ENCODE measurements at regions of chr10 and their contacts with region 1.

Region 1: DNA sequence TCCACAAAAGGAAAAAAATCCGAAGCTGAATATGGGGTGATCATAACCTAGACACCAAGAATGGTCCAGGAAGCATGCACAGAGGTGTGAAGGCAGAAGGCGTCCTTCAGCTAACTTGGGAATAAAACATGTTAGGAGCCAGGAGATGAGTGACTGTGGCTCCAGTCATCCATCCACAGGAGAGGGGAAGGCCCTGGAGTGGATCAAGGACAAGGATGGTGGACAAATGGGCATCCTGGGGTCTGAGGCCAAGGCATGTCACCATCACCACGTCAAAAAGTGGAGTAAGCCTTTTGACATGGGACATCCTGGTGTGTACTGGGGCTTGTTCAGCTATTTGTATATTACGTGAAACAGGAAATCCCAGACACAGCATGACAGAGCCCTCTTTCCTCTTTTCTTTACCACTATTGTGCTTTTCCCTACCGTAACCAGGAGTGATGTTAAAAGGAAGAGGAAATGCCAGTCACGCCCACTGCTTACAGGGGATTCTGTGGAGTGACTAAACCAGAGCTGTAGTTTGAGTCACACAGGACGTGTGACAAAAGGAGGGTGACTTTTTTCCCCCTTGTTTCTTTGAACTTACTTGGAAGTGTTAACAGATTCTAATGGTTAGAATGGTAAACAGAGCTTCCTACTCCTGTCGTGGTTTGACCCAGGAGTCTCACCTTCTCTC is 15.4 kb downstream of the ACSL5 start:
- DNase-seq: peak; percentile 84
- H3K4me3 Mint-ChIP-seq: peak overlapping the region; percentile 70
- H3K27ac Mint-ChIP-seq: peak overlapping the region; percentile 88
- H3K4me1 Mint-ChIP-seq: peaks cover 47% of the 10 kb centered on the region
- H3K27me3 Mint-ChIP-seq: no peaks in the 10 kb centered on the region

Region 2: DNA sequence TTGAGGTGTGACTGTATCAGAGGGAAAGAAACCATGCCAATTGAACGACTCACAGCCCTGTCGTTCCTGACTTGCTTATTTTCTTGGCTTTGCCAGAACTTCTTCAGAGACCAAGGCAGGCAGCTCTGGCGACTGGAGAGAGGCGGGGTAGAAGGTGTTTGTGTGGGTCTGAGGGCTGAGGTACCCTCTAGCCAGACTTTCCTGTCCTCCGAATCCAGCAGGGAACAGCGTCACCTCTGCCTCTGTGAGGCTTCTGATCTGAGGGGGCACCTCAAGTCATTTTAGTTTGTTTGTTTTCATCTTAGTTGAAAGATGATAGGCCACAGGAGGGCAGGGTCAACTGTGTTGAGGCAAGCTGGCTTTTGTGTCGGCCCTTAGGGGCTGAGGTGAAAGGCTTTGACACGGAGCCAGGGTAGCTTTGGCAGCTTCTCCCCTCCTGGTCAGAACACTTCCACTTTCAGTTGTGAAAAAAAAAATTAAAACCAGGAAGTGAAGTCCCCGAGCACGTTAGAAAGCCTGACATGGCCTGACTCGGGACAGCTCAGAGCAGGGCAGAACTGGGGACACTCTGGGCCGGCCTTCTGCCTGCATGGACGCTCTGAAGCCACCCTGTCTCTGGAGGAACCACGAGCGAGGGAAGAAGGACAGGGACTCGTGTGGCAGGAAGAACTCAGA is 13.4 kb before region 1 on chr10:
- intact Hi-C with region 1: loop called (anchors 1 kb)
- DNase-seq: peak; percentile 88
- H3K4me3 Mint-ChIP-seq: peak overlapping the region; percentile 100
- H3K27ac Mint-ChIP-seq: peak overlapping the region; percentile 100
- H3K4me1 Mint-ChIP-seq: peaks cover 52% of the 10 kb centered on the region
- H3K27me3 Mint-ChIP-seq: no peaks in the 10 kb centered on the region

Region 3: DNA sequence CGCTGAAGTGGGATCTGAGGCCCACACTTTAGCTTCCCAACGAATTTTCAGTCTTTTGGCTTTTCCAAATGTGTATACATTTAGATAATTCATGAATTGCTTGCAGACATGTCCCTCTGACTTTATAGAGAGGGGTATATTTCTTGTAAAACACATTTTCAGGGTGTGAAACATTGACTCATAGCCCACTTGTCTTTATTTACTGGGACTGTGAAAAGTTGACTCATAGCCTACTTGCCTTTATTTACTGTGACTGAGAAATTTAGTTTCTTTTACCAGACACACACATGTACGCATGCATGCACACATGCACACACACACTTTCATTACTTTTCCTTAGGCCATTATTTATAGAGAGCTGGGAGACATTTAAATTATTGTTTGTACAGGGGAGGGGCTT is 136.9 kb after region 1 on chr10:
- intact Hi-C with region 1: loop called (anchors 2 kb)
- DNase-seq: no peak
- H3K4me3 Mint-ChIP-seq: no peak overlapping the region
- H3K27ac Mint-ChIP-seq: no peak overlapping the region
- H3K4me1 Mint-ChIP-seq: peaks cover 11% of the 10 kb centered on the region
- H3K27me3 Mint-ChIP-seq: peaks cover 7% of the 10 kb centered on the region